Psoas muscle (tissue), 8 donors: ENCODE measurements at regions of chr4 and their contacts with region 1.

Region 1: GRCh38 chr4:3201718-3202702 is 46.9 kb upstream of the MSANTD1 start:
- DNase-seq: no peak
- ATAC-seq: peak; percentile 55 to 79 (median 74)
- H3K4me3 ChIP-seq: no peak overlapping the region
- H3K27ac ChIP-seq: peak overlapping the region; percentile 75
- H3K4me1 ChIP-seq: peaks cover 52% of the 10 kb centered on the region
- H3K27me3 ChIP-seq: no peaks in the 10 kb centered on the region
- CTCF ChIP-seq: no peak

Region 2: DNA sequence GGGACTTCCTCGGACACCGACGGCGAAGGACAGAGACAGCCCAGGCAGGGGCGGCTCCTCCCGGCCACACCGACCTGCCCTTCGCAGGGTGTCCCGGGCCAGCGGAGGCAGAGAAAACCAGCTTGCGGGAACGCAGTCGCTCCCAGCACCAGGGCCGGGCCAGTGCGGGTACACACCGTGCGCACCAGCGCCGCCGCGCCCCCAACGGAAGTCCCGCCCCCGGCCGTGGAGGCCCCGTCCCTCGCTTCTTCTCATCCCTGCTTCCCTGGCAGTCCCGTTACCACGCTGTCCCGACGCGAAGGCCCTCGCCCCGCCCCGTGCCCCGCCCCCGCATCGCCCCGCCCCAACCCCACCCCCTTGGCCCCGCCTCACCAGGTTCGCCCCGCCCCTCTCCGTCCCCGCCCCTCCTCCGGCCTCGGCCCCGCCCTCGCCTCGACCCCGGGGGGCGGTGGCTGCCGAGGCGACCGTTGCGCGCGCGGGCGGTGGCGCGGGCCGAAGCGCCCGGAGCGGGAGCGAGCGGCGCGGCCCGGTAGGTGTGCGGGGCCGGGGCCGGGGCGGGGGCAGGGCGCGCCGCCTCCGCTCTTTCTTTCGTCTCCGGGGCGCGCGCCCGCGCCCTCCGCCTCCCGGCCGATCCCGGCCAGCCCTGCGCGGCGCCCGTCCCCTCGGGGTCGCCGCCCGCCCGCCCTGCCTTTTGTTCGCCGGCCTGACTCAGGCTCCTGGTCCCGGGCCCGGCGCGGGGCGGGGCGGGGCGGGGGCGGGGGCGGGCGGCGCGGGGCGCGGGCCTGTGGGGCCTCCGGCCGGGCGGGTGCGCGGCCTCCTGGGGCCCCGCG is 90.8 kb after region 1 on chr4 and contains the start of gene RGS12:
- intact Hi-C with region 1: loop called in 1 of 2 experiments (anchors 5 kb)
- DNase-seq: peak; percentile 96 to 98
- ATAC-seq: peak; percentile 92 to 94 (median 92)
- H3K4me3 ChIP-seq: peak within 1 kb of the TSS; percentile 88
- H3K27ac ChIP-seq: peak within 1 kb of the TSS; percentile 96
- H3K4me1 ChIP-seq: peaks cover 30% of the 10 kb centered on the region
- H3K27me3 ChIP-seq: no peaks in the 10 kb centered on the region
- CTCF ChIP-seq: no peak
- total RNA-seq, gene RGS12: 13.9 to 29.0 (median 17.8) TPM

Region 3: GRCh38 chr4:3346146-3346545 is 144.1 kb after region 1 on chr4:
- intact Hi-C with region 1: loop called in 1 of 2 experiments (anchors 5 kb)
- DNase-seq: no peak
- ATAC-seq: peak; percentile 93 to 97 (median 94)
- H3K4me3 ChIP-seq: no peak overlapping the region
- H3K27ac ChIP-seq: no peak overlapping the region
- H3K4me1 ChIP-seq: peaks cover 6% of the 10 kb centered on the region
- H3K27me3 ChIP-seq: no peaks in the 10 kb centered on the region
- CTCF ChIP-seq: peak; percentile 93